Gastrocnemius medialis (tissue), 4 donors: ENCODE measurements at regions of chr6 and their contacts with region 1.

Region 1: GRCh38 chr6:1396952-1397868 is 7.8 kb downstream of the FOXF2 start:
- DNase-seq: peak in 1 of 2 donors; percentile 35
- ATAC-seq: peak; percentile 56 to 64
- H3K4me3 ChIP-seq: no peak overlapping the region
- H3K27ac ChIP-seq: no peak overlapping the region
- H3K4me1 ChIP-seq: peaks cover 0 to 7% of the 10 kb centered on the region in 2 donors
- H3K27me3 ChIP-seq: peaks cover 57 to 65% (median 61%) of the 10 kb centered on the region in 3 donors
- CTCF ChIP-seq: peak; percentile 51 to 91 (median 73)
- POLR2A ChIP-seq: no peak

Region 2: DNA sequence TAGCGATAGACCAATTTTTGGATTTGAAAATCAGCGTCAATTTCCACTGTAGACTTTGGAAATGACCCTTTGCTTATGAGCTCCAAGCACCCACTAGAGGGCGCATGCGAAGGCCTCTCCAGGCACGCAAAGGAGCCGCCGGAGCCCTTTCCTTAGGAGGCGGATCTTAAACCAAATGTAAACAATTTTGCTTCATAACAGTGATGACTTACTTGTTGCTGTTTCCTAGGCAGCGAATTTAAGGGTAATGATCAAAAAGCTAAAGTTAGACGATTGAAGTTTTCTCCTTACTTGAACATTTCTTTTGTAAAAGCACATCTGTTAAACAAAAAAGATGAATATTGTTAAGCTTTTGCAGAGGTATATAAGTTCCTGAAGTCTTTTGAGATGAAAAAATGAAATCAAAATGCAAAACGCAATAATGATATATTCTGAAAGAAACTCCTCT is 675.1 kb before region 1 on chr6:
- in situ Hi-C with region 1: loop called in 1 of 4 experiments (anchors 25 kb)
- intact Hi-C with region 1: no loop called
- DNase-seq: peak; percentile 32 to 38
- ATAC-seq: peak in 1 of 2 donors; percentile 33
- H3K4me3 ChIP-seq: no peak overlapping the region
- H3K27ac ChIP-seq: no peak overlapping the region
- H3K4me1 ChIP-seq: no peaks in the 10 kb centered on the region
- H3K27me3 ChIP-seq: peaks cover 0 to under 1% (median 0%) of the 10 kb centered on the region in 3 donors
- CTCF ChIP-seq: peak; percentile 47 to 88 (median 56)
- POLR2A ChIP-seq: no peak

Region 3: GRCh38 chr6:797479-798077 is 599.6 kb before region 1 on chr6:
- in situ Hi-C with region 1: loop called in 2 of 4 experiments (anchors 25 kb)
- intact Hi-C with region 1: loop called (anchors 5 kb)
- DNase-seq: no peak
- ATAC-seq: peak in 1 of 2 donors; percentile 47
- H3K4me3 ChIP-seq: no peak overlapping the region
- H3K27ac ChIP-seq: no peak overlapping the region
- H3K4me1 ChIP-seq: no peaks in the 10 kb centered on the region
- H3K27me3 ChIP-seq: peaks cover 4 to 29% (median 18%) of the 10 kb centered on the region in 3 donors
- CTCF ChIP-seq: peak; percentile 50 to 74 (median 66)
- POLR2A ChIP-seq: no peak

Region 4: DNA sequence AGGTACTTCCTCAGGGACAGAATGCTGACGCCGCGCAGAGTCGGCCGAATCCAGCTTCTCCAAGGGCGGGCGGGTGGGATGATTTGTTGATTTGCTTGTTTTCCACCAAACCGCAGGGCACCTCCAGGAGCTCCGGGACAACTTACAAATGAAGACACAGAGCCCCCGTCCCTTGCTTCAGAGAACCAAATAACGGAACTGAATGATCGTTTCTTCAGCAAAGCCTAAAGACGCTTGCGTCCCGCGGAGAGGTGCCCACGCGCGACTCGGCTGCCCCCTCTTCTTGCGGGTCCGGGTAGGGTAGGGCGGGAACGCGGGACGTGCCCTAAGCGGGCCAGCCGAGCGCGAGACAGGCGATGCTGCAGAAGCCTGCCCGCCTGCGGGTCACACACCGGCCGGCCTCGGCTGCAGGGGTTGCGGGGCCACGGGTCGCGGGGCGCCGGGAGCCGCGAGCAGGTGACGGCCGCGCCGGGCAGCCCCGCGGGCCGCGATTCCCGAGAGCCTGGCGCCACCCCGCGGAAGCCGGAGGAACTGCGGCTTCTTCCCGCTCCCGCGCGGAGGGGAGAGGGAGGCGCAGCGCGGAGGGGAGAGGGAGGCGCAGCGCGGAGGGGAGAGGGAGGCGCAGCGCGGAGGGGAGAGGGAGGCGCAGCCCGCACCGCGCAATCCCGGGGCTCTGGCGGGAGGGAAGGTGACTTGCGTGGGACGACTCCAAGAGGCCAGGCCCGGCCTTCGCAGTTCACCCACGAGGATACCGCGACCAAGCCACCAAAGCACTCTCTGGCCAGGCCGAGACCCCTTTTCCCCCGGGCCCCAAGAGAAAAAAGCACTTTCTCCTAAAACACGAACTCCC is 15.5 kb before region 1 on chr6:
- in situ Hi-C with region 1: no loop called
- intact Hi-C with region 1: no loop called
- DNase-seq: no peak
- ATAC-seq: peak; percentile 65 to 72
- H3K4me3 ChIP-seq: peak overlapping the region; percentile 27 to 55 (median 36)
- H3K27ac ChIP-seq: no peak overlapping the region
- H3K4me1 ChIP-seq: peaks cover 7 to 18% of the 10 kb centered on the region in 2 donors
- H3K27me3 ChIP-seq: peaks cover 92 to 100% (median 96%) of the 10 kb centered on the region in 3 donors
- CTCF ChIP-seq: peak; percentile 70 to 93 (median 86)
- POLR2A ChIP-seq: no peak

Region 5: DNA sequence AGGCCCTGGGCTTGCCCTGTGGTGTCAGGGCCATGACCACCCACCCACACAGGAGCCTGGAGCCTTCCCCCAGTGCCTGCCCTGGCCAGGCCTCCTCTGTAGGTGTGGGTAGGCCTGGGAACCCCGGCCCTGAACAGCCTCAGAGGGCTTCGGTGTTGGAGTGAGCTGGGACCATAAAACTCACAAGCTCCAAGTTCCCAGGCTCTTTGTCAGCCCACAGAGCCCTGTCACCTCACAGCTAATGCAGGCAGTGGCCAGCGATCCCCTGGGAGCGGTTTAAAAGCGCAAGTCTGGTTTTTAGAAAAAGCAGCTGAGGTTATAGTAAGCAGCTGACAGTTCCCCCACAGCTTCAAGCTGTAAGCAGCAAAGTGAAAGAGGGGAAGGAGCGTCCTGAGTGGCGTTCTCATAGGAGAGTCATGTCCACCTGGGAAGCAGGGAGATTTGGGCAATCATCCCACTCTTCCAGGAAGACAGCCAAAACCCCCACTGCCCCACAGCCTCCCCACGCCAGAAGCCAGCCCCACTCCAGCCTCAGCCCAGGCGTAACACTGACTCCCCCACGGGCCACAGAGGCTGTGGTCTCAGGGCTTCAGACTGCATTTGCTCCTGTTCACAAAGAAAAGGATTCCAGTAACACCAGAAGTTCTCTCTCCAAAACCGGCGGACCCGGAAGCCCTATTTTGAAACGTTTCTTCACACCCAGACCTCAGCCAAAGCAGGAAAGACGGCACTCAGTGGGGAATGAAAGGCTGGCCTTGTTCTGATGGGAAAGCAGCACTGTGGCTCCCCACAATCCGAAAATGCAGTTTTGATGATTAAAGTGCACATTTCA is 178.2 kb after region 1 on chr6:
- in situ Hi-C with region 1: no loop called
- intact Hi-C with region 1: no loop called
- DNase-seq: no peak
- ATAC-seq: peak; percentile 33 to 46
- H3K4me3 ChIP-seq: peak overlapping the region in 1 of 4 donors; percentile 30
- H3K27ac ChIP-seq: peak overlapping the region; percentile 46 to 68 (median 60)
- H3K4me1 ChIP-seq: peaks cover 5 to 6% of the 10 kb centered on the region in 2 donors
- H3K27me3 ChIP-seq: no peaks in the 10 kb centered on the region
- CTCF ChIP-seq: no peak
- POLR2A ChIP-seq: no peak